GM12878 (cell line): ENCODE measurements at regions of chr2 and their contacts with region 1.

Region 1: DNA sequence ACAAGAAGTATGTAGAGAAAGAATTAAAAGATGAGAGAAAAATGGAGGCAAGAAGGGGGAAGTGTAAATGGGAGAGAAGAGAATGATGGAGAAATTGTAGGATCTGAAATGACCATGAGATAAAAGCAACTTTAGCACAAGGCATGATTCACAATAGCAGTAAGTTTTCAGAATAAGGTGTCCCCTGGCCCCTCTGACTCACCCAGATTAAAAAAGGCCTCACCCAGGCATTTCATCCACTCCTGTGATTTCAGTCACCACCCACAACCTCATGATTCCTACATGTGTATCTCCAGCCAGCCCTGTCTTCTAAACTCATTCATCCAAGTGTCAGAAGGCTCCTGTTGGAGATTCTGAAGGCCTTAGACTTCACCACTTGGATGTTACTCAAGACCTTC is 56.6 kb downstream of the SP100 start:
- DNase-seq: peak; percentile 34
- ATAC-seq: peak; percentile 71
- H3K4me3 ChIP-seq: no peak overlapping the region
- H3K27ac ChIP-seq: peak overlapping the region; percentile 21
- H3K4me1 ChIP-seq: peaks cover 32% of the 10 kb centered on the region
- H3K27me3 ChIP-seq: no peaks in the 10 kb centered on the region
- CTCF ChIP-seq: no peak
- EP300 ChIP-seq: no peak
- POLR2A ChIP-seq: no peak
- RAD21 ChIP-seq: no peak

Region 2: GRCh38 chr2:230296917-230297316 is 175.7 kb before region 1 on chr2:
- CTCF ChIA-PET with region 1: no interaction called
- POLR2A ChIA-PET with region 1: no interaction called
- RAD21 ChIA-PET with region 1: no interaction called
- SMC1A ChIA-PET with region 1: no interaction called
- in situ Hi-C with region 1: no loop called
- intact Hi-C with region 1: no loop called
- DNase-seq: no peak
- ATAC-seq: no peak
- H3K4me3 ChIP-seq: no peak overlapping the region
- H3K27ac ChIP-seq: no peak overlapping the region
- H3K4me1 ChIP-seq: no peaks in the 10 kb centered on the region
- H3K27me3 ChIP-seq: no peaks in the 10 kb centered on the region
- CTCF ChIP-seq: no peak
- EP300 ChIP-seq: no peak
- POLR2A ChIP-seq: no peak
- RAD21 ChIP-seq: no peak

Region 3: GRCh38 chr2:230418341-230419016 is 54.1 kb before region 1 on chr2:
- CTCF ChIA-PET with region 1: no interaction called
- POLR2A ChIA-PET with region 1: interaction called, 8 read pairs
- RAD21 ChIA-PET with region 1: interaction called, 3 read pairs
- SMC1A ChIA-PET with region 1: interaction called, 10 read pairs
- in situ Hi-C with region 1: no loop called
- intact Hi-C with region 1: loop called (anchors 2 kb)
- DNase-seq: no peak
- ATAC-seq: peak; percentile 20; the same call in 2 of the 3 replicates
- H3K4me3 ChIP-seq: peak overlapping the region; percentile 94
- H3K27ac ChIP-seq: peak overlapping the region; percentile 95
- H3K4me1 ChIP-seq: peaks cover 24% of the 10 kb centered on the region
- H3K27me3 ChIP-seq: no peaks in the 10 kb centered on the region
- CTCF ChIP-seq: no peak
- EP300 ChIP-seq: no peak
- POLR2A ChIP-seq: no peak
- RAD21 ChIP-seq: no peak

Region 4: DNA sequence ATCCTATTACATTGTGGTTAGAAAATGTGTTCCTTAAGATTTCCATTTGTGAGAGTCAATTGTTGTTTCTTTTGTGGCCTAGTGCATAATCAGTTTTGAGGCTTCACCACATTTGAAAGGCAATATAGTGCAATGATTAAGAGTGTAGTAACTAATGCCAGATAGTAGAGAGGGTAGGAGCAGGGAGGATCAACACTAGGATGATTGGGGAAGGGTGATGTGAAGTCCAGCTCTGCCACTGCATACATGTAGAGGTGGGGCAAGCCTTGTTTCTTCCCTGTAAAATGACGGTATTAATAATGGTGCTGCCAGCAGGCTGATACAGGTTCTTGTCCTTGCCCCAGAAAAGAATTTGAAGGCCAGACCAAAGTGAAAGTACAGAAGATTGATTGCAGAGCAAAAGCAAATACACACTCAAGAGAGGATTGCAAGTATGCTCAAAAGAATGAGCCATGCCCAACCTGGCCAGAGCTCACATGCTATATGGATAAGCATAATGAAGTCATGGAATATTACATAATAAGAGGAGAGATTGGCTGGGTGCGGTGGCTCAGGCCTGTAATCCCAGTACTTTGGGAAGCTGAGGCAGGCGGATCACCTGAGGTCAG is 48.7 kb before region 1 on chr2:
- CTCF ChIA-PET with region 1: no interaction called
- POLR2A ChIA-PET with region 1: interaction called, 8 read pairs
- RAD21 ChIA-PET with region 1: interaction called, 3 read pairs
- SMC1A ChIA-PET with region 1: interaction called, 10 read pairs
- in situ Hi-C with region 1: no loop called
- intact Hi-C with region 1: loop called (anchors 2 kb)
- DNase-seq: no peak
- ATAC-seq: peak; percentile 43
- H3K4me3 ChIP-seq: peak overlapping the region; percentile 52; the same call in 1 of the 2 replicates
- H3K27ac ChIP-seq: no peak overlapping the region
- H3K4me1 ChIP-seq: peaks cover 4% of the 10 kb centered on the region; the same call in 1 of the 2 replicates
- H3K27me3 ChIP-seq: no peaks in the 10 kb centered on the region
- CTCF ChIP-seq: no peak
- EP300 ChIP-seq: no peak
- POLR2A ChIP-seq: no peak
- RAD21 ChIP-seq: no peak

Region 5: DNA sequence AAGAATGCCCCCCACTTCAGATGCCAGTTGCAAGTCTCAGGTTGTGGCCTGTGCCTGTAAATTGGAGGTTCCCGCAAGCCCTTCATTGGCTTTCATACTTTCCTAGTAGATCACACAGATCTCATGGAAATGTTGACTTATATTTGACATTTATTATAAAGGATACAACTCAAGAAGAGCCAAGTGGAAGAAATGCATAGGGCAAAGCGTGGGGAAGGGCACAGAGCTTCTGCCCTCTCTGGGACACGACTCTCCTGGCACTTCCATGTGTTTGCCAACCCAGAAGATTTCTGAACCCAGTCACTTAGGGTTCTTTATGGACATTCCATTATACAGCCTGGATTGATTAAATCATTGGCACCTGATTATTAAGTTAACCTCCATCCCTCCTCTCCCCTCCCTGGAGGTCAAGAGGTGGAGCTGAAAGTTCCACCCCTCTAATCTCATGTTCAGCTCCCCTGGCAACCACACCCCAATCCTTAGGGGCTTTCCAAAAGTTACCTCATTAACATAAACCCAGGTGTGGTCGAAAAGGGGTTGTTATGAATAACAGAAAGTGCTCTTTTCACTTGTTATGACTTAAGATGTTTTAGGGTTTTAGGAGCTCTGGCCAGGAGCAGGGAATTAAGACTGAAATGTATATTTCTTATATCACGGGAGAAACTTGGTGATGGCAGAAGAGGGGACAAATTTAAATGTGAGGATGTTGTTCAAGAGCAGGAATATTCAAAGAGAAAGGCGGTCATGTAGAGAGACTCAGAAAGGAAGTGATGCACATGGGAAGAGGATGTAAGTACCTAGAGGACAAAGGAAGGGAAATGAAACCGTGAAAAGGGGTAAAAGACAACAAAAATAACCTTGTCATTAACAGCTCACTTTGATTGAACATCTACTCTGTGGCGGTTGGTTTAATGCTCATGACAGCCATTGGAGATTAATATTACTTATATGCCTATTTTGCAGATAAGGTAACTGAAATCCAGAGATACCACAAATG is 24.9 kb before region 1 on chr2:
- CTCF ChIA-PET with region 1: interaction called, 6 read pairs
- POLR2A ChIA-PET with region 1: interaction called, 16 read pairs
- RAD21 ChIA-PET with region 1: interaction called, 11 read pairs
- SMC1A ChIA-PET with region 1: interaction called, 5 read pairs
- in situ Hi-C with region 1: no loop called
- intact Hi-C with region 1: no loop called
- DNase-seq: peak; percentile 84
- ATAC-seq: peak; percentile 87
- H3K4me3 ChIP-seq: 0 out of 2 replicates have a peak overlapping the region, but pooled peaks have one; percentile 13
- H3K27ac ChIP-seq: peak overlapping the region; percentile 89
- H3K4me1 ChIP-seq: peaks cover 53% of the 10 kb centered on the region
- H3K27me3 ChIP-seq: no peaks in the 10 kb centered on the region
- CTCF ChIP-seq: no peak
- EP300 ChIP-seq: peak; percentile 80 to 84; a peak in 3 of 4 replicates
- POLR2A ChIP-seq: no peak
- RAD21 ChIP-seq: no peak

Region 6: DNA sequence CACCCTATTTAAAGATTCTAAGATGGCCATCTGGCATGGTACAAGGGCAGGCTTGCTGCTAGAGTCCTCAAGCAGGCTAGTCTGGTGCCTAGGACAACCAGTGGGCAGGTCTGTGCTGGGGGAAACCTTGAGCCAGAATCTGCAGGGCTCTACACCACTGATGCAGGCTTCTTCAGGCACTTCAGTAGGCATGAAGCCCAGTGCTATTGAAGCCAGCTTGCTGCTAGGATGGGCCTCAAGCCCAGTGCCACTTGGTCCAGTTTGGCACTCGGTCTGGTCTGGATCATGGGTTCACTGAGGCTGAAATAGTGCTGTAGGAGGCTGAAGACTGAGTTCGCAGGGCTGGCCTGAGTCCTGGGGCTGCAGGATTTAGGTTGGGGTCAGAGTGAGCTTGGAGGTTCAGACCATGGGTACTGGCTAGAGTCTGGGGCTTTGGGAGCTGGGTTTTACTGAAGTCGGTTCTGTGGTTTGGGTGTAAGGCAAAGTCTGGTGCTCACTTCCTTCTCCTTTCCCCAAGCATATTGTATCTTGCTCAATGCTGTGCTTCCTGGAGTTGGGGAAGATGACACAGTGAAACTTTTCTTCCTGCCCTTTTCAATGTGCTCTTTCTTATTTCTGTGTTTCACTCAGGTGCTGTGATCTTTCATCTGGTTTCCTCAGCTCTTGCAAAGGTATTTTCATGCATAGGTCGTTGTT is 15.4 kb before region 1 on chr2:
- CTCF ChIA-PET with region 1: interaction called, 3 read pairs
- POLR2A ChIA-PET with region 1: interaction called, 3 read pairs
- RAD21 ChIA-PET with region 1: interaction called, 3 read pairs
- SMC1A ChIA-PET with region 1: interaction called, 15 read pairs
- in situ Hi-C with region 1: no loop called
- intact Hi-C with region 1: no loop called
- DNase-seq: no peak
- ATAC-seq: peak; percentile 37
- H3K4me3 ChIP-seq: no peak overlapping the region
- H3K27ac ChIP-seq: peak overlapping the region; percentile 49
- H3K4me1 ChIP-seq: peaks cover 18% of the 10 kb centered on the region
- H3K27me3 ChIP-seq: no peaks in the 10 kb centered on the region
- CTCF ChIP-seq: no peak
- EP300 ChIP-seq: no peak
- POLR2A ChIP-seq: peak; percentile 44
- RAD21 ChIP-seq: no peak

Region 7: GRCh38 chr2:230541934-230542380 is 69.3 kb after region 1 on chr2:
- CTCF ChIA-PET with region 1: interaction called, 3 read pairs
- POLR2A ChIA-PET with region 1: interaction called, 4 read pairs
- RAD21 ChIA-PET with region 1: interaction called, 14 read pairs
- SMC1A ChIA-PET with region 1: no interaction called
- in situ Hi-C with region 1: no loop called
- intact Hi-C with region 1: no loop called
- DNase-seq: peak; percentile 54
- ATAC-seq: peak; percentile 76
- H3K4me3 ChIP-seq: peak overlapping the region; percentile 21; the same call in 1 of the 2 replicates
- H3K27ac ChIP-seq: peak overlapping the region; percentile 41; the same call in 1 of the 2 replicates
- H3K4me1 ChIP-seq: peaks cover 53% of the 10 kb centered on the region
- H3K27me3 ChIP-seq: no peaks in the 10 kb centered on the region
- CTCF ChIP-seq: no peak
- EP300 ChIP-seq: peak; percentile 25 to 47; a peak in 2 of 4 replicates
- POLR2A ChIP-seq: no peak
- RAD21 ChIP-seq: 0 out of 2 replicates have a peak, but pooled peaks have one; percentile 4

Region 8: DNA sequence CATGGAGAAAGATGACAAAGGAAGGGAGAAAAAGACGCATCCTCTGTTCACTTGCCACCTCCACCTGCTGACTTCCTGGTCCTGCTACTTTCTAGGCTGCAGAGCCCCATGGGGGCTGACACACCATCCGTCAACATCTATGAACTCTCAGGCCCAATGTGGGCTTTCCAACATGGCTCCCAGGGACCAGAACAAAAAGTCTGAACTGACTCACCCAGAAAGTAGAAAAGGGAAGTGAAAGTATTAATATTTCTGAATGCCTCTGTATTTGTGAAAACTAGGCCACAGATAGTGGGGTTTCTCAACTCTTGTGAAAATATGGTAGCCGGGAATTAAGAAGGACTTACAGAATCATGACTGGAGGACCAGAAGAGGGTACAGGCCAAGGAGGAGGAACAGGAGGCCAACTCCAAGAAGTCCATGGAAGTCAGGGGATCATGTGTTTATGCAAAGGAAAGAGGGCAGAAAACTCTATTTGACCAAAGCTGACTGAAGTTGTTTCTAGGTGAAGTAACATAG is 116.9 kb after region 1 on chr2:
- CTCF ChIA-PET with region 1: no interaction called
- POLR2A ChIA-PET with region 1: interaction called, 4 read pairs
- RAD21 ChIA-PET with region 1: interaction called, 13 read pairs
- SMC1A ChIA-PET with region 1: interaction called, 3 read pairs
- in situ Hi-C with region 1: no loop called
- intact Hi-C with region 1: loop called (anchors 2 kb)
- DNase-seq: peak; percentile 98
- ATAC-seq: peak; percentile 90
- H3K4me3 ChIP-seq: no peak overlapping the region
- H3K27ac ChIP-seq: peak overlapping the region; percentile 96
- H3K4me1 ChIP-seq: peaks cover 62% of the 10 kb centered on the region
- H3K27me3 ChIP-seq: no peaks in the 10 kb centered on the region
- CTCF ChIP-seq: 0 out of 6 replicates have a peak, but pooled peaks of 1 of the 3 experiments have one; percentile 3
- EP300 ChIP-seq: peak; percentile 91 to 98
- POLR2A ChIP-seq: peak; percentile 77
- RAD21 ChIP-seq: peak; percentile 38; the same call in 1 of the 2 replicates